ENCODE measurements at regions of chr20 and their contacts with region 1.

Region 1: DNA sequence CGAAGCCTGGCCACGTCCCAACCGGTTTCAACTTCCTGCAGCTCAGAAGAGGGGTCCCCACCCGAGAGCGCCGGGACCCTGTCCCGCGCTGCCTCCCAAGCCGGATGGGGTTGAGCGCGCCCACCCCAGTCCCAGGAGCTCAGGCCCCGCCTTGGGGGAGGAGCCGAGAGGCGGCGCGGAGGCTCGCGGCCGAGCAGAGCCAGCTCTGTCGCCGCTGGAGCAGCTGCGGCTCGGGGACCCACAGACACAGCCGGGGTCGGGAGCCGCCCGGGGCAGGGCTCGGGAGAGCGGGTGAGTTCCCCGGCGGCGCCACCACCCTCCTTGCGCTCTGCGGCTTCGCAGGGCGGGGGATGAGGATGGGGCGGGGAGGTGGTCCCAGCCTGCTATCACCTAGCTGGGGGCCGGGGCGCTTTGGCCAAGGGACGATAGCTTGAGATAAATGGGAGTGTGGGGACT is at the start of gene PPP1R16B:
- DNase-seq: peak; percentile 76
- H3K4me3 Mint-ChIP-seq: peak within 1 kb of the TSS; percentile 85
- H3K27ac Mint-ChIP-seq: peak within 1 kb of the TSS; percentile 96
- H3K4me1 Mint-ChIP-seq: peaks cover 47% of the 10 kb centered on the region
- H3K27me3 Mint-ChIP-seq: no peaks in the 10 kb centered on the region
- total RNA-seq, gene PPP1R16B: 38.1 to 40.0 TPM

Region 2: DNA sequence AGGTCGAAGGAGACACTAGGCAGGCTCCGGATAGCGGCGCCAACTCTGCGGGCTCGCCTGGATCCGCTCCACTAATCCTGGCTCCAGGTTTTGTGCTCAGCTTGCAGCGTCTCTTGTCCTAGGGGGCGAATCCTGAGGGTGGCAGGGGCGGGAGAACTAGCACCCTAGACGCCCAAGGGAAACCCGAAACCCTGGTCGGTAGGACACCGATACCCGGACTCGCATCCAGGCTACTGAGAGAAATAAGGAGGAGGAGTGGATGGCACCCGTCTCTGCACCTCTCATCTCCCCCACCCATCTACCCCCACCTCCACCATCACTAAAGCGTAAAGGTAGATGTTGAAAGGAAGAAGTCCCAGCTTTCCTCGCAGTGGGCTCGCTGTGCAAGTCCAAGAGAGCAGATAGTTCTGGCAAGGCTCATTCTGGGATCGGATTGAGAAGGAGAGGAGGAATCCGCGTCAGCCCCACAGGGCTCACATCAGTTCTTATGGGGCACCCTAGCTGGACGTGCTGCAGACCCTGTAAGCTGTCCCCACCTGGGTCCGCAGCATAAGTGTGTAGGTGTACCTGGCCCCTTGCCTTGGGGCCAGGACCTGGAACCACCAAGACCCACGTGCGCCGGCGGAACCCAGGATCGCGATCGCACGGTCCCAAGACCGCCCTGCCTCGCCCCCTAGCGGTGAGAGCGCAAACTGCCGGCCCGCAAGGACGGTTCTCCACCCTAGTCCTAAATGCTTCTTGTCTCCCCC is 74.4 kb before region 1 on chr20:
- CTCF ChIA-PET with region 1: interaction called, 4 read pairs
- intact Hi-C with region 1: loop called (anchors 2 kb)
- DNase-seq: peak; percentile 85
- H3K4me3 Mint-ChIP-seq: peak overlapping the region; percentile 61
- H3K27ac Mint-ChIP-seq: no peak overlapping the region
- H3K4me1 Mint-ChIP-seq: peaks cover 39% of the 10 kb centered on the region
- H3K27me3 Mint-ChIP-seq: peaks cover 85% of the 10 kb centered on the region

Region 3: GRCh38 chr20:38764567-38765355 is 40.8 kb before region 1 on chr20:
- CTCF ChIA-PET with region 1: interaction called, 3 read pairs
- intact Hi-C with region 1: loop called (anchors 2 kb)
- DNase-seq: peak; percentile 80
- H3K4me3 Mint-ChIP-seq: no peak overlapping the region
- H3K27ac Mint-ChIP-seq: peak overlapping the region; percentile 33
- H3K4me1 Mint-ChIP-seq: peaks cover 21% of the 10 kb centered on the region
- H3K27me3 Mint-ChIP-seq: no peaks in the 10 kb centered on the region

Region 4: DNA sequence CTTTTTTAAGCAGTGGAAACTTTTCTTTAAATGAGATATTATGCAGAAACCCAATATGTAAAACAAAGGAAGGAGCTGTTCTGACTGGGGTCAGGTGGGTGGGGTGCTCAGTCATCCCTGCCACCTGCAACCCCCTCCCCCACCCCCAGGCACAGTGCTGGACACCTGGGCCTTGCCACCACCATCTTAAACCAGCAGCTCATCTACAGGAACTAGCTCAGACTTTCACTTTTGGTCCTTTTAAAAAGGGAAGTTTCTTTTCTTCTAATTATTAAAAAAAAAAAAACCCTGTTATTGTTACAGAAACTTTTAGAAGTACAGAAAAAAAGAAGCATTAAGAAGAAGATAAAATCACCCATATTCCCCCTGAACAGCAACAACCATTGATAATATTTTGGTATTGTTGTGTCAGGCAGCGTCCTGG is 37.0 kb after region 1 on chr20:
- CTCF ChIA-PET with region 1: interaction called, 4 read pairs
- intact Hi-C with region 1: loop called (anchors 1 kb)
- DNase-seq: peak; percentile 84
- H3K4me3 Mint-ChIP-seq: no peak overlapping the region
- H3K27ac Mint-ChIP-seq: peak overlapping the region; percentile 91
- H3K4me1 Mint-ChIP-seq: peaks cover 73% of the 10 kb centered on the region
- H3K27me3 Mint-ChIP-seq: no peaks in the 10 kb centered on the region

Region 5: GRCh38 chr20:38893565-38894090 is 88.1 kb after region 1 on chr20:
- CTCF ChIA-PET with region 1: interaction called, 51 read pairs
- intact Hi-C with region 1: loop called (anchors 1 kb)
- DNase-seq: peak; percentile 85
- H3K4me3 Mint-ChIP-seq: no peak overlapping the region
- H3K27ac Mint-ChIP-seq: peak overlapping the region; percentile 42
- H3K4me1 Mint-ChIP-seq: peaks cover 33% of the 10 kb centered on the region
- H3K27me3 Mint-ChIP-seq: no peaks in the 10 kb centered on the region

Region 6: GRCh38 chr20:38962044-38962927 is 156.8 kb after region 1 on chr20 and contains the start of gene DHX35:
- CTCF ChIA-PET with region 1: no interaction called
- intact Hi-C with region 1: loop called (anchors 2 kb)
- DNase-seq: peak; percentile 99
- H3K4me3 Mint-ChIP-seq: peak within 1 kb of the TSS; percentile 95
- H3K27ac Mint-ChIP-seq: peak within 1 kb of the TSS; percentile 98
- H3K4me1 Mint-ChIP-seq: peaks cover 32% of the 10 kb centered on the region
- H3K27me3 Mint-ChIP-seq: no peaks in the 10 kb centered on the region
- total RNA-seq, gene DHX35: 9.5 to 10.3 TPM

Measured in activated naive CD4-positive, alpha-beta T cell treated with anti-CD3 and anti-CD28 coated beads for 36 hours (primary cell).